Uterus (tissue), 4 donors: ENCODE measurements at regions of chr11 and their contacts with region 1.

Region 1: DNA sequence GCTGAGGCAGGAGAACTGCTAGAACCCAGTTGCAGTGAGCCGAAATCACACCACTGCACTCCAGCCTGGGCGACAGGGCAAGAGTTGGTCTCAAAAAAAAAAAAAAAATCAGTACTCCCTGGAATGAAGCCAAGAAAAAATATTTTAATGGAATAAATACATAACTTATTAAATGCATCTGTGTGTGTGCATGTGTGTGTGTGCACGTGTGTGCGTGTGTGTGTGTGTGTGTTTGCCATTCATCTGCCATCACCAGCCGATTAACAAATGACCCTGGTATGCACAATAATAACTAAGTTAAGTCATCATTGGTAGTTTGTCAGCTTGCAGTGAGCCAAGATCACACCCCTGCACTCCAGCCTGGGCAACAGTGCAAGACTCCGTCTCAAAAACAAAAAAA is 35.0 kb upstream of the SCGB1A1 start:
- DNase-seq: no peak
- H3K4me3 ChIP-seq: no peak overlapping the region
- H3K27ac ChIP-seq: no peak overlapping the region
- H3K4me1 ChIP-seq: no peaks in the 10 kb centered on the region
- H3K27me3 ChIP-seq: no peaks in the 10 kb centered on the region
- CTCF ChIP-seq: no peak
- POLR2A ChIP-seq: no peak

Region 2: DNA sequence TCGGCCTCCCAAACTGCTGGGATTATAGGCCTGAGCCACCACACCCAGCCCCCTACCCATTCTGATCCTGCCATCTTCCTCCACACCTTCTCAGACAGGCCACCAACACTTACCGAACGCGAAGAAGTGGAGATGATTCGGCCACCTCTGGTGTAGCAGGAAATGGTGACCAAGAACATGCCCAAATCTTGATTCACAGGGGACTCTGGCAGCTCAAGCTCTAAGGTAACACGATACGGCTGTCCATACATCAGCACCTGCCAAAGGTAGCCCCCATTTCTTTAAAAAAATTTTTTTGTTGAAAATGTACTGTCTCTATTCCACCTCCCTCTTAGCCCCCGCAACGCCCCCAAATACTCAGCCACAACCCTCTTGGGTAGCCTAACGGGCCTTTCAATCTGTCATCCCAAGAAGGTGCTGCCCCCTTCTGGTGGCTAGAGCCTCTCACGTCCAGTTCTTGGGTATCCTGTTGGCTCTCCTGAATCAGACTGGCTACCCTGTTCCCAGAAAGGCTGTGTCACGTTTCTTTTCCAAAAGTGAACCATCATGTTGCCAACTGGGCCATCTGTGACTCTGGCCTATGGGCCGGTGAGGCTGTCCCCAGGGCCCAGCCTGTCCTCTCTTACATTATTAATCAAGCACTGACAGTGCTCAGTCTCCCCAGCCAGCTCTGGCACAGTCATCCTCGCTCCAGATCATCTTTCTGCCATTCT is 310.8 kb after region 1 on chr11:
- intact Hi-C with region 1: loop called (anchors 10 kb)
- DNase-seq: peak; percentile 80 to 86
- H3K4me3 ChIP-seq: no peak overlapping the region
- H3K27ac ChIP-seq: peak overlapping the region in 1 of 2 donors; percentile 38
- H3K4me1 ChIP-seq: no peaks in the 10 kb centered on the region
- H3K27me3 ChIP-seq: no peaks in the 10 kb centered on the region
- CTCF ChIP-seq: peak; percentile 66 to 83 (median 77)
- POLR2A ChIP-seq: no peak